ENCODE measurements at regions of chr9 and their contacts with region 1.

Region 1: DNA sequence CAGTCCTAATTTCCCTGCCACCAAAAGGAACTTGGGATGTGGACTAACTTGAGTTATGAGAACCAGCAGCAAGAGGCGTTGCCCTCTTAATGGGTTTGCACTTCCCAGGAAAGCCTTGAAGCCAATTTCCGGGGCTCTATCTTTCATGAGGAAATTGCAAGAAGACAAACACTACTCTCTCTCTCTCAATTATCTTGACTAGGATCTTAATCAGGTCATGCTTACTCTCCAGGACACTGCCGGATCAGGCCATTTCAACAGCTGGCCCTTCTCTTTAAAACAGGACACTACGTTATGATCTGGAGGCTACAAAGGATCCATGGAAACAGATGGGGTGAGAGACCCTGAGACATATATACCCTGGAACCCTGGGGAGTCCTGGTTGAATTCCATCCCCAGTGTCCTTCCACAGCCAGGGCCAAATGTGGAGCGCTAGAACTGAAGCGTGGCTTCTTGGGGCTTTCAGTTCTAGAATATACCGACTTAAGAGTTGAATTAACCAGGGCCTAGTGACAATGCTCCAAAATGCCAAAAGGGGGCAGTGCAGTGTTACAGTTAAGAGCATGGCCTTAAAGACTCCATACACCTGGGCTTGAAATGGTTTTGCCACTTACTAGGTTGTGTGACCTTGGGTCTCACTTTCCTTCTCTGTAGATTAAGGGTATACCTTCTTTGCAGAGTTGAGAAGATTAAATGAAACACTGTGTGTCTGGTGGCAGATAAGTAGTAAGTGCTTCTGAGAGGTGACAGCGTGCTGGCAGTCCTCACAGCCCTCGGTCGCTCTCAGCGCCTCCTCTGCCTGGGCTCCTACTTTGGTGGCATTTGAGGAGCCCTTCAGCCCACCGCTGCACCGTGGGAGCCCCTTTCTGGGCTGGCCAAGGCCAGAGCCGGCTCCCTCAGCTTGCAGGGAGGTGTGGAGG is 21.1 kb downstream of the FAM219A start:
- DNase-seq: no peak
- ATAC-seq: peak; percentile 85
- H3K4me3 Mint-ChIP-seq: no peak overlapping the region
- H3K27ac Mint-ChIP-seq: no peak overlapping the region
- H3K4me1 Mint-ChIP-seq: no peaks in the 10 kb centered on the region
- H3K27me3 Mint-ChIP-seq: no peaks in the 10 kb centered on the region
- CTCF ChIP-seq: no peak

Region 2: GRCh38 chr9:34332076-34332964 is 104.9 kb before region 1 on chr9:
- CTCF ChIA-PET with region 1: no interaction called
- POLR2A ChIA-PET with region 1: no interaction called
- intact Hi-C with region 1: no loop called
- DNase-seq: no peak
- ATAC-seq: no peak
- H3K4me3 Mint-ChIP-seq: no peak overlapping the region
- H3K27ac Mint-ChIP-seq: no peak overlapping the region
- H3K4me1 Mint-ChIP-seq: peaks cover 38% of the 10 kb centered on the region
- H3K27me3 Mint-ChIP-seq: no peaks in the 10 kb centered on the region
- CTCF ChIP-seq: no peak

Region 3: DNA sequence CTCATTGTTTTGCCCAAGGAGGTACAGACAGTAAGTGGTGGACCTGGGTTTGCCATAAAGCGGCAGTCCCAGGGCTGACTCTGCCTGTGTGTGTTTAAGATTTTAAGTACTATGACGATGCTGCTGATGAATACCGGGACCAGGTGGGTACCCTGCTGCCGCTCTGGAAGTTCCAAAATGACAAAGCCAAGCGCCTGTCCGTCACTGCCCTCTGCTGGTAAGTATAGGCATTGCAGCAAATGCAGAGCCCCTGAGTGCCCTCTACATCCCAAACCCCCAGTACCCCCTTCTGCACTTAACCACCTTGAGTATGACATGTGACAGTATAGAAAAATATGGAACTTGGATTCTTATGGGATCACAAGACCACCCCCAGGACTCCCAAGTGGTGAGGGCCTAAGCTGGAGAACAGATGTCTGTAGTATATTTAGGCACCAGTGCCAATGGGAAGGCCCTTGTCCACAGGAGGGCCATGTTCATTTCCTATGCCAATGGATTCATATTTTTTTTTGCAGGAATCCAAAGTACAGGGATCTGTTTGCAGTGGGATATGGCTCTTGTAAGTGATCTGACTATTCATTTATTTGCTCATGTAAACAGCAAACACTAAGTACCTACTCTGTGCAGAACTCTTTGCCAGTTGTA is 63.5 kb after region 1 on chr9:
- CTCF ChIA-PET with region 1: interaction called, 14 read pairs
- POLR2A ChIA-PET with region 1: no interaction called
- intact Hi-C with region 1: loop called (anchors 1 kb)
- DNase-seq: peak; percentile 55
- ATAC-seq: peak; percentile 95
- H3K4me3 Mint-ChIP-seq: no peak overlapping the region
- H3K27ac Mint-ChIP-seq: no peak overlapping the region
- H3K4me1 Mint-ChIP-seq: no peaks in the 10 kb centered on the region
- H3K27me3 Mint-ChIP-seq: peaks cover 13% of the 10 kb centered on the region
- CTCF ChIP-seq: peak; percentile 75

Region 4: DNA sequence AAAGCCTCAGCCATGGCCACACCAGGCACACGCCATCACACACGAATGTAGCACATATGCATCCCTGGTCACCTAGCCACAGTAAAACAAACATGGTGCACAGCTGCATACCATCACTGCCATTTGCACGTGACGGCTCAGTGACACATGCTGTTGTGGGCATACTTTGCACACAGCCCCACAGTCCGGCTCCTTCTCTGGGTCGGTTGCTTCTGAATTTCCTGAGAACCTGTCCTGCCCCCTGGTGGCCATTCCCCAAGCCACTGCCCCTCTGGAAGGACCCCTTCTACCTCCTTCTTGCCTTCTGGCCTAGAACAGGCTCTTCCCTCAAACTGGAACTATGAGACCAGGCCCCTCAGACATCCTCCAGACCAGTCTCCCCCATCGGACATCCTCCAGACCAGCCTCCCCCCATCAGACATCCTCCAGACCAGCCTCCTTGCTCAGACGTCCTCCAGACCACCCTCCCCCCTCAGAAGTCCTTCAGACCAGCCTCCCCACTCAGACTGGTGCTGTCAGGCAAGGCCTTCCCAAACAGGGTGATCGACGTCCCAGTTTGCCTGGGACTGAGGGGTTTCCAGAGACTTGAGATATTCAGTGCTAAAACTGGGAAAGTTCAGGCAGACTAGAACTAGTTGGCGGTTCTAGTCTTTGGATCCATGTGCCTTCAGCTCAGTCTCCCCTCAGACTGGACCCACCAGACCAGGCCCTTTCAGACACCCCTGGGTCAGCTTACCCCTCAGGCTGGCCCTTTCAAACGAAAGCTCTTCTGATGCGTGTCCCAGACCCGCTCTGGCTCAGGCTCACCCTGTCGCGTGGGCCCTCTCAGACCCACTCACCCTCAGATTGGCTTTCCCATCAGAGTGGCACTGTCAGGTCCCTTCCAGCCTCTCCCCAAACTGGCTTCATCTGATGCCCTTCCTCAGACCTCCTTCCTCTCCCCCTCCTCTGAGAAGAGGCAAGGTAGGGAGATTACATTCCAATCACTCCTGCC is 109.9 kb after region 1 on chr9:
- CTCF ChIA-PET with region 1: no interaction called
- POLR2A ChIA-PET with region 1: no interaction called
- intact Hi-C with region 1: loop called (anchors 1 kb)
- DNase-seq: no peak
- ATAC-seq: peak; percentile 58
- H3K4me3 Mint-ChIP-seq: no peak overlapping the region
- H3K27ac Mint-ChIP-seq: no peak overlapping the region
- H3K4me1 Mint-ChIP-seq: no peaks in the 10 kb centered on the region
- H3K27me3 Mint-ChIP-seq: peaks cover 29% of the 10 kb centered on the region
- CTCF ChIP-seq: no peak

Measured in activated B cell treated with CpG ODN at 0.5 μM for 24 hours (primary cell).